ENCODE measurements at regions of chr19 and their contacts with region 1.

Region 1: GRCh38 chr19:41706741-41707501 is 1.5 kb upstream of the CEACAM5 start:
- H3K4me3 ChIP-seq: peak overlapping the region; percentile 30
- H3K27ac ChIP-seq: no peak overlapping the region
- H3K4me1 ChIP-seq: peaks cover 2% of the 10 kb centered on the region; the same call in 1 of the 2 replicates
- CTCF ChIP-seq: peak; percentile 100

Region 2: DNA sequence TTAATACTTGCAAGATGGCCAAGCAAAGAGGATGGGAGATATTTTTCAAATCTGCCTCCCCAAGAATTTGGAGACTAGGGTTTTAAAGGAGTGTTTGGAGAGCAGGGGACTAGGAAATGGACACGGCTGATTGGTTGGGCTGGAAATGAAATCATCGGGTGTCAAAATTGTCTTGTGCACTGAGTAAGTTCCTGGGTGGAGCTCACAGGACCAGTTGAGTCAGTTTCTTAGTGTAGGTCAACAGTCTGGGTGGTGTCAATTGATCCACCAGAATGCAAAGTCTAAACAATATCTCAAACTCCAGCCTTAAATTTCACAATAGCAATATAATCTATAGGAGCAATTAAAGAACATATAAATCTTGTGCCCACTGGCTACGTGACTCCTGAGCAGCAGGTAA is 57.1 kb before region 1 on chr19:
- CTCF ChIA-PET with region 1: interaction called, 22 read pairs
- POLR2A ChIA-PET with region 1: no interaction called
- H3K4me3 ChIP-seq: no peak overlapping the region
- H3K27ac ChIP-seq: no peak overlapping the region
- H3K4me1 ChIP-seq: no peaks in the 10 kb centered on the region
- CTCF ChIP-seq: no peak

Region 3: GRCh38 chr19:41691268-41691970 is 15.5 kb before region 1 on chr19:
- CTCF ChIA-PET with region 1: interaction called, 57 read pairs
- POLR2A ChIA-PET with region 1: no interaction called
- H3K4me3 ChIP-seq: no peak overlapping the region
- H3K27ac ChIP-seq: no peak overlapping the region
- H3K4me1 ChIP-seq: no peaks in the 10 kb centered on the region
- CTCF ChIP-seq: peak; percentile 79

Region 4: DNA sequence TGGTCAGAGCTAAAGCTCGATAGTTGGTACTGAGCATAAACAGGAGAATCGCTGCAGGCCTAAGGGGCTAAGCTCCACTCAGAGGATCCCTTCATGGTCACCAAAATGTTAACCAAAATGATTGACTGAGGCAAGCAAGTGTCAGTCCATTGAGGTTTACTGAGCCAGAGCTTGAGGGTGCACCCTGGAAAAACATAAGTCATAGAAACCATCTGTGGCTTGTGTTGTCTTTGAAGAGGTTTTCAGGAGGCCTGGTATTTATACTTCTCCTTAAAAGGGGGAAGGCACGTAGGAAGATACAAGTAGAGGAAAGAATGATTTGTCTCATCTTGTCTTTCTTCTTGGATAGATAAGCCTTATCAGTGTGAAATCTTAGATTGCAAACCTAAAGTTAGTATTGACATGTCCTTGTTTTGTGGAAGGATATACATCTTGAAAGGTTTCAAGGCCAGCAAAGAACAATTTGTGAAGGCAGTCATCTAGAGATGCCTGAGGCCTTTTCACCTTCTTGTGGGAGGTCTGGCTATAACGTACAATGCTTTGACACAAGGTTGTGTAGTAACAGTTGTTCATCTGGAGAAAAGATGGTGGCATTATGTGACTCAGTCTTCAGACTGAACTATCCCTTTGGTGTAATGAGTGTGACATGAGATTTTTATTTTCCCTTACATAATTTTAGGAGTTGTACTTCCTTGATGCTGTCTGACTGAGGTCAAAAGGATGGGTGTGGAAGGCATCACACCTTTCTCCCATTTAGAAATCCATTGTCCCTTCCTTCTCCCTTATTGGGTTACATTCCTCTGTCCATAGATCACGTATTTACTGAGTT is 33.7 kb after region 1 on chr19:
- CTCF ChIA-PET with region 1: interaction called, 121 read pairs
- POLR2A ChIA-PET with region 1: no interaction called
- H3K4me3 ChIP-seq: no peak overlapping the region
- H3K27ac ChIP-seq: no peak overlapping the region
- H3K4me1 ChIP-seq: no peaks in the 10 kb centered on the region
- CTCF ChIP-seq: no peak

Region 5: DNA sequence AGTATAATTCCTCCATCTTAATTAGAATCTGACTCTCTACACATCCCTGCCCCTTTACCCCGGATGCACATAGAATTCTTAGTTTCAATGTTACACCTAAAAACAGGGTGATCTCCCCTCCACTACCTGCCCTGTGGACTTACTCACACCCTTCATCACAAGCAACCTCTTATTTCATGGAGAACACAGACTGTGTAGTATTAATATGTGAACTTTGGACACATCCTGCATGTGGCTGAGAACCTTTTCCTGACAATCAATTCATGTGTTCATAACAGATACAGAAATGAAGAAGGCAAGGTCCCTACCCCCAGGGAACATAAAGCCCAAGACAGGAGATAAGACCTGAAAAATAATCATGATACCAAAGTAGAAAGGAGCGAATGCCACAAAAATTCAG is 60.2 kb after region 1 on chr19:
- CTCF ChIA-PET with region 1: interaction called, 13 read pairs
- POLR2A ChIA-PET with region 1: no interaction called
- H3K4me3 ChIP-seq: no peak overlapping the region
- H3K27ac ChIP-seq: no peak overlapping the region
- H3K4me1 ChIP-seq: no peaks in the 10 kb centered on the region
- CTCF ChIP-seq: no peak

Region 6: GRCh38 chr19:41801792-41802211 is 94.9 kb after region 1 on chr19:
- CTCF ChIA-PET with region 1: interaction called, 10 read pairs
- POLR2A ChIA-PET with region 1: no interaction called
- H3K4me3 ChIP-seq: no peak overlapping the region
- H3K27ac ChIP-seq: no peak overlapping the region
- H3K4me1 ChIP-seq: no peaks in the 10 kb centered on the region
- CTCF ChIP-seq: no peak